Natural killer cell (primary cell): ENCODE measurements at regions of chr1 and their contacts with region 1.

Region 1: DNA sequence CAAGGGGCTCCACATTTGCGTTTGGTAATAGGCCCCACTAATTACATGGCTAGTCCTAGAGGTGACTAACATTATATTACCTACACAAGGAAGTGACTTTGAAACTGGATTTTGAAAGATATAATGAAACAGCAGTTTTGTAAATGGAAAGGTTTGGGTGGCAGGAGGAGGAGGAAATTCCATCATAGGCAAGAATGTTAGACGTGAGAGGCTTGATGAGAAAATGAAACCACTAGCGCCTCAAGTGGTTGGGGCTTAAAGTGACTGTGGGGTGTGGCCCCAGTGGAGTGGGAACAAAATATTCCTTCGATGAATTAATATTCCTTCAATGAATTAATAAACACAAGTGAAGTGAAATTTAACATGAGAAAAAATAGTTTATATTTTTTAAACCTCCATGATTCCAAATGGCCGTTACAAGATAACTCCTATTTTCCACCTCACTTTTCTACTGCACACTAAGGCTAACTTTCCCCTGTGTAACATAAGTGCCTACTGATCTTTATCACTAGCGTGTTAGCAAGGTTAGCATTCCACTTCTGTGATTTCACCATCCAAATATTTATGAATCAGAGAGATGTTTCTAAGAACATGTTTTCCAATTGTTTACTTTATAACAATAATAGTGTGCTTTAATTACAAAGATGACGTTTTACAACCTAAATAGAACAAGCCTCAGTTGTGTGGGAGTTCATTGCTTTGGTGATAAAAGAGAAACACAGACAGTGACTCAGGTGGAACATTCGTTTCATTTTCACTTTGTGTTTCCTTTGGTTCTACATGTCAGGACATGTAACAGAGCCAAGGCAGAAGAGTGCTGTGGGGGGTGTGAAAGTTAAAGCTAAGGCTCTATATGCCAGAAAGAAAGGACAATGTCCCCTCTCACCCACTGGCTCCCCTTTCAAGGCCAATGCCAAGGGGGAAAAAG is 12.5 kb upstream of the ATF3 start:
- DNase-seq: peak; percentile 39 to 77
- ATAC-seq: peak; percentile 91 to 93 (median 93)
- H3K4me3 ChIP-seq: no peak overlapping the region
- H3K4me3 Mint-ChIP-seq: peak overlapping the region; percentile 77
- H3K27ac ChIP-seq: peak overlapping the region; percentile 69
- H3K27ac Mint-ChIP-seq: peak overlapping the region; percentile 87 to 91
- H3K4me1 ChIP-seq: peaks cover 7% of the 10 kb centered on the region
- H3K4me1 Mint-ChIP-seq: peaks cover 16 to 17% of the 10 kb centered on the region in 2 donors
- H3K27me3 ChIP-seq: peaks cover 6% of the 10 kb centered on the region
- H3K27me3 Mint-ChIP-seq: peaks cover 22 to 37% of the 10 kb centered on the region in 2 donors
- CTCF ChIP-seq: peak; percentile 50

Region 2: DNA sequence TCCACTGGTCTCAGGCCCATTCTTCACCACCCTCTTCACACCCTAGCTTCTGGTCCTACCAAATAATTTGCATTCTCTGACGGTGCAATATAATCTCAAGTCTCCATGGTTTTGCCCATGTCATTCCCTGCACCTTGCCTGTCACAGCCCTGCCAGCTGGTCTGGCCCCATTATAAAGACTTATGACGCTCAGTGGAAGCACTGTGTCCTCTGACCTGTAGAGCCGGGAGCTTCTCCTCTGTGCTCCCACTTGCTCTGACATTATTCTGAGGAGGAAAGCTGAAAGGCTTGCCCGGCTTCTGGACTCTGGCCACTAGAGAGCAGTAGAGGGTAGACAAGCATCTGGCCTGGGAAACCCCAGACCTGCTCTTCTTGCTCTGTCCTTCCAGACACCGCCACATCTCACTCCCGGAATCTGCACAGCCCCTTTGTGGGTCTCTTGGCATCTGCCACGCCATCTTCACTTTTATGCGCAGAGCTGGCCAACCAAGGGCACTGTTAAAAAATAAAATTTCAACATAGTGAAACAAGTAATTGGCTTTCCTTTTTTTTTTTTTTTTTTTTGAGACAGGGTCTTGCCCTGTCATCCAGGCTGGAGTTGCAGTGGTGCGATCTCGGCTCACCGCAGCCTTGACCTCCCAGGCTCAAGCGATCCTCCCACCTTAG is 118.9 kb before region 1 on chr1:
- intact Hi-C with region 1: loop called (anchors 1 kb)
- DNase-seq: peak; percentile 66 to 89
- ATAC-seq: peak; percentile 79 to 87 (median 81)
- H3K4me3 ChIP-seq: no peak overlapping the region
- H3K4me3 Mint-ChIP-seq: no peak overlapping the region
- H3K27ac ChIP-seq: no peak overlapping the region
- H3K27ac Mint-ChIP-seq: peak overlapping the region in 1 of 2 donors; percentile 73
- H3K4me1 ChIP-seq: peaks cover 36% of the 10 kb centered on the region
- H3K4me1 Mint-ChIP-seq: peaks cover 33 to 46% of the 10 kb centered on the region in 2 donors
- H3K27me3 ChIP-seq: no peaks in the 10 kb centered on the region
- H3K27me3 Mint-ChIP-seq: peaks cover 9 to 15% of the 10 kb centered on the region in 2 donors
- CTCF ChIP-seq: peak; percentile 86

Region 3: GRCh38 chr1:212498283-212499040 is 97.6 kb before region 1 on chr1:
- intact Hi-C with region 1: no loop called
- DNase-seq: no peak
- ATAC-seq: no peak
- H3K4me3 ChIP-seq: no peak overlapping the region
- H3K4me3 Mint-ChIP-seq: no peak overlapping the region
- H3K27ac ChIP-seq: no peak overlapping the region
- H3K27ac Mint-ChIP-seq: no peak overlapping the region
- H3K4me1 ChIP-seq: no peaks in the 10 kb centered on the region
- H3K4me1 Mint-ChIP-seq: no peaks in the 10 kb centered on the region
- H3K27me3 ChIP-seq: no peaks in the 10 kb centered on the region
- H3K27me3 Mint-ChIP-seq: peaks cover 14 to 21% of the 10 kb centered on the region in 2 donors
- CTCF ChIP-seq: no peak

Region 4: DNA sequence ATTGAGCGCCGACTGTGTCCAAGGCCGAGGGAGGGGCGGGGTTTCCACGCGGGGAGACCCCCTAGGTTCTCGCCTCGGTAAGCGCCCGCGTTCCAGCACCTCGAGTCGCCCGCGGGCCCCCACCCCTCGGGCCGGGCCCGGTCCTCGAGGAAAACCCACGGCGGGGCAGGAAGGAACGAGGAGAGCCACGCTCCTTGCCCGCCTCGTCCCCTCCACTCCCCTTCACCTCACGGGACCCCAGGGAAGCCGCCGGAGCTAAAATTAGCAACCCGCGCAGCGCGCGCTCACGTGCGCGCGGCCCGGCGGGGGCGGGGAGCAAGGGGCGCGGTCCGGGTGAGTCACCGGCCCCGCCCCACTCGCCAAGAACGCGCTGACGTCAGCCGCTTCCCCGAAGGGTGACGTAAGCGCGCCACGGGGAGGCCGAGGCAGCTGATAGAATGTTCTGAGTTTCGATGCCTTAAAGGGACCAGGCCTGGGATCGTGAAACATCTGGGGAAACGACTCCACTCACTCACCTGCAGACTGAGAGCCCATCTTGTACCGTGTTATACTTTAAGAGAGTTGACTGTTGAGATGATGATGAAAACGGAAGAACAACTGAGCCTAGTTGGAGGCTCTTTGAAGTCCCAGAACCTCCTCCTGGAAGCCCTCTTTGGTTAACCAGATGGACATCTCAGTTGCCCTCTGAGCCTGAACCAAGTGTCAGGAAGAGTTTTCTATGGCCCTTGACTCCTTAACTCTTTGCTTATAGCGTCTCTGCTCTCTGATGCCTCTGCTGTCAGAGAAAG is 37.2 kb before region 1 on chr1:
- intact Hi-C with region 1: loop called (anchors 2 kb)
- DNase-seq: peak; percentile 91 to 97
- ATAC-seq: peak; percentile 92 to 96 (median 95)
- H3K4me3 ChIP-seq: peak overlapping the region; percentile 92
- H3K4me3 Mint-ChIP-seq: peak overlapping the region; percentile 91
- H3K27ac ChIP-seq: peak overlapping the region; percentile 93
- H3K27ac Mint-ChIP-seq: peak overlapping the region; percentile 90 to 96
- H3K4me1 ChIP-seq: peaks cover 14% of the 10 kb centered on the region
- H3K4me1 Mint-ChIP-seq: peaks cover 6 to 11% of the 10 kb centered on the region in 2 donors
- H3K27me3 ChIP-seq: no peaks in the 10 kb centered on the region
- H3K27me3 Mint-ChIP-seq: peaks cover 0 to 3% of the 10 kb centered on the region in 2 donors
- CTCF ChIP-seq: no peak

Region 5: GRCh38 chr1:212566522-212567479 is 29.2 kb before region 1 on chr1:
- intact Hi-C with region 1: loop called (anchors 1 kb)
- DNase-seq: peak; percentile 52 to 72
- ATAC-seq: peak; percentile 95 to 98 (median 96)
- H3K4me3 ChIP-seq: peak overlapping the region; percentile 57
- H3K4me3 Mint-ChIP-seq: peak overlapping the region; percentile 95
- H3K27ac ChIP-seq: peak overlapping the region; percentile 41
- H3K27ac Mint-ChIP-seq: peak overlapping the region; percentile 87 to 91
- H3K4me1 ChIP-seq: peaks cover 9% of the 10 kb centered on the region
- H3K4me1 Mint-ChIP-seq: peaks cover 19% of the 10 kb centered on the region in 2 donors
- H3K27me3 ChIP-seq: no peaks in the 10 kb centered on the region
- H3K27me3 Mint-ChIP-seq: peaks cover 0 to 5% of the 10 kb centered on the region in 2 donors
- CTCF ChIP-seq: no peak

Region 6: GRCh38 chr1:212608209-212608955 is 12.3 kb after region 1 on chr1 and contains the start of gene ATF3:
- intact Hi-C with region 1: loop called (anchors 1 kb)
- DNase-seq: peak; percentile 85 to 87
- ATAC-seq: peak; percentile 74 to 85 (median 75)
- H3K4me3 ChIP-seq: peak within 1 kb of the TSS; percentile 87
- H3K4me3 Mint-ChIP-seq: peak within 1 kb of the TSS; percentile 93
- H3K27ac ChIP-seq: peak within 1 kb of the TSS; percentile 76
- H3K27ac Mint-ChIP-seq: peak within 1 kb of the TSS; percentile 84 to 96
- H3K4me1 ChIP-seq: peaks cover 28% of the 10 kb centered on the region
- H3K4me1 Mint-ChIP-seq: peaks cover 21 to 39% of the 10 kb centered on the region in 2 donors
- H3K27me3 ChIP-seq: peaks cover 35% of the 10 kb centered on the region
- H3K27me3 Mint-ChIP-seq: peaks cover 51 to 58% of the 10 kb centered on the region in 2 donors
- CTCF ChIP-seq: no peak
- total RNA-seq, gene ATF3: 62.2 to 135 (median 78.5) TPM